ENCODE measurements at regions of chr6 and their contacts with region 1.

Region 1: DNA sequence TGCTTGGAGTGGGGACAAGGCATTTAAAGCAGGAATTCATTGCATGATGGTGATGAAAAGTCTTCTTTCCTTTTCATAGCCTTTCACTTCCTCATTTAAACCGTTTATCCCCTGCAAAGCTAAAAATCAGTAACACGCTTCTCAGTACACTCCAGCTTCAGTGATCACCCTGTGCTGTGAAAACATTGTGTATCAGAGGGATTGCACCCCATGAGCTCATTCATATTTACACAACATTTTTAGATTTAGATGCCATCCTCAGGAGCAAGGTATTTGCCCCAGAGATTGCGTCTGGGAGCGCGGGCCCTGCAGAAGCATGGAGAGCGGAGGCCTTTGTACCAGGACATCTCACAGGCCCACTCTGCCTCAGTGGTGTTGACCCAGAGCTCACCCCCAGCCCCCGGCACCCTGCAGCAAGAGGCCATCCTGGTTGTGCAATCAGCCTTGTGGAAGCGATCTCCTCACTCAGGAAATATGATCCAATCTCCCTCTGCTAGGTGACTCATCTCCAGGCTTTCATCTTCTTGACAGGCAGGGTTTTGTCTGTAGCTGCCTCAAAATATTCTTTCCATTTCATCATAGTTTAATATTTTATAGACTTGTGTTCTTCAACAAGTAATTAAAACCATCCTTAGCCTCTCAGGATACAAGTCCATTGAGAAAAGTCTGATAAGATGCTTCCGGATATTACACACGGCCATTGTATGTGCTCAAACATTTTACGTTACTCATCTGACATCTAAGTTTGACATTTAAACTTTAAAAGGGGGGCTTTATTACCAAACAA is 38.9 kb upstream of the THBS2 start:
- DNase-seq: peak; percentile 77 to 93 (median 88)
- H3K4me3 ChIP-seq: peak overlapping the region in 1 of 3 experiments; percentile 37
- H3K4me3 Mint-ChIP-seq: peak overlapping the region in 1 of 2 donors; percentile 67
- H3K27ac ChIP-seq: peak overlapping the region; percentile 76 to 88
- H3K27ac Mint-ChIP-seq: peak overlapping the region; percentile 89 to 98 (median 95)
- H3K4me1 ChIP-seq: peaks cover 58 to 63% of the 10 kb centered on the region in 2 donors
- H3K4me1 Mint-ChIP-seq: peaks cover 62% of the 10 kb centered on the region
- H3K27me3 ChIP-seq: no peaks in the 10 kb centered on the region
- H3K27me3 Mint-ChIP-seq: peaks cover 0 to 3% (median 2%) of the 10 kb centered on the region in 3 donors
- CTCF ChIP-seq: no peak

Region 2: DNA sequence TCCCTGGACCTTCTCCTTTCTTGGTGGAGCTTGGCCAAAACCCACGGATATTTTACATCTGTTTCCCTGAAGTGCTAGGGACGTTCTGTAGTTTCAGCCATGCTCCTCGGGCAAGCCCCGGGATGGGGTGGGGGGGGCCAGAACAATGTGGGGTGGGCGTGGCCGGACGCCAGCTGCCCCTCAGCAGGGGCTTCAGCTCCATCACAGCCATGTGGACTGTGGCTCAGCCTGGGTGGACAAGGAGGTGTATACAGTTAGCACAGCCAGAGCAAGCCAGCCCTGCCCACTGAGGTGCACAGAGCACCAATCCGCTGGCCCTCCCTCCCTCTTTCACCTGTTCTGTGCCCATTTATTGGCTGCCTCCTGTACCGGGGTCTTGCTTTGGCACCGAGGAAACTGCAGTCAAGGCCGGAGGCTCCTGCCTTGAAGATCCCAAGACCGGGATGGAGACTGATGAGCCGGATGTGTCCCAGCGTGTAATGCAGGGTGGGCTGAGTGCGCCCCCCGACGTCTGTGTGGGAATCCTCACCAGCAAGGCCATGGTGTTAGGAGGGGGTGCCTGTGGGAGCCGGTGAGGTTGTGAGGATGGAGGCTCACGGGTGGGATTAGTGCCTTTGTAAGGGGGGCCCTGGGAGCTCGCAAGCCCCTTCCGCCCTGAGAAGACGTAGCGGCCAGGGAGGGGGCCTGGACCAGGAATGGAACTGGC is 1241.5 kb before region 1 on chr6:
- intact Hi-C with region 1: no loop called
- DNase-seq: no peak
- H3K4me3 ChIP-seq: no peak overlapping the region
- H3K4me3 Mint-ChIP-seq: no peak overlapping the region
- H3K27ac ChIP-seq: no peak overlapping the region
- H3K27ac Mint-ChIP-seq: peak overlapping the region in 1 of 7 donors; percentile 34
- H3K4me1 ChIP-seq: no peaks in the 10 kb centered on the region
- H3K4me1 Mint-ChIP-seq: no peaks in the 10 kb centered on the region
- H3K27me3 ChIP-seq: no peaks in the 10 kb centered on the region
- H3K27me3 Mint-ChIP-seq: peaks cover 0 to under 1% (median 0%) of the 10 kb centered on the region in 3 donors
- CTCF ChIP-seq: no peak

Region 3: GRCh38 chr6:169212897-169213813 is 79.4 kb before region 1 on chr6:
- intact Hi-C with region 1: loop called in 1 of 2 experiments (anchors 5 kb)
- DNase-seq: peak; percentile 93 to 96 (median 94)
- H3K4me3 ChIP-seq: peak overlapping the region; percentile 21 to 63 (median 23)
- H3K4me3 Mint-ChIP-seq: peak overlapping the region; percentile 58 to 77
- H3K27ac ChIP-seq: peak overlapping the region; percentile 80 to 88
- H3K27ac Mint-ChIP-seq: peak overlapping the region; percentile 88 to 97 (median 93)
- H3K4me1 ChIP-seq: peaks cover 28 to 33% of the 10 kb centered on the region in 2 donors
- H3K4me1 Mint-ChIP-seq: peaks cover 28% of the 10 kb centered on the region
- H3K27me3 ChIP-seq: no peaks in the 10 kb centered on the region
- H3K27me3 Mint-ChIP-seq: peaks cover 0 to 2% (median 0%) of the 10 kb centered on the region in 3 donors
- CTCF ChIP-seq: peak; percentile 35

Region 4: GRCh38 chr6:169689247-169689646 is 396.7 kb after region 1 on chr6:
- intact Hi-C with region 1: no loop called
- DNase-seq: no peak
- H3K4me3 ChIP-seq: no peak overlapping the region
- H3K4me3 Mint-ChIP-seq: no peak overlapping the region
- H3K27ac ChIP-seq: no peak overlapping the region
- H3K27ac Mint-ChIP-seq: no peak overlapping the region
- H3K4me1 ChIP-seq: no peaks in the 10 kb centered on the region
- H3K4me1 Mint-ChIP-seq: peaks cover 2% of the 10 kb centered on the region
- H3K27me3 ChIP-seq: no peaks in the 10 kb centered on the region
- H3K27me3 Mint-ChIP-seq: peaks cover 0 to 2% (median 0%) of the 10 kb centered on the region in 3 donors
- CTCF ChIP-seq: no peak